PC-9 (cell line): ENCODE measurements at regions of chr16 and their contacts with region 1.

Region 1: GRCh38 chr16:13436641-13437412 is 483.1 kb upstream of the ERCC4 start:
- DNase-seq: peak; percentile 58 to 73
- H3K4me3 ChIP-seq: no peak overlapping the region
- H3K27ac ChIP-seq: no peak overlapping the region
- H3K4me1 ChIP-seq: peaks cover 25% of the 10 kb centered on the region
- H3K27me3 ChIP-seq: no peaks in the 10 kb centered on the region
- CTCF ChIP-seq: no peak

Region 2: DNA sequence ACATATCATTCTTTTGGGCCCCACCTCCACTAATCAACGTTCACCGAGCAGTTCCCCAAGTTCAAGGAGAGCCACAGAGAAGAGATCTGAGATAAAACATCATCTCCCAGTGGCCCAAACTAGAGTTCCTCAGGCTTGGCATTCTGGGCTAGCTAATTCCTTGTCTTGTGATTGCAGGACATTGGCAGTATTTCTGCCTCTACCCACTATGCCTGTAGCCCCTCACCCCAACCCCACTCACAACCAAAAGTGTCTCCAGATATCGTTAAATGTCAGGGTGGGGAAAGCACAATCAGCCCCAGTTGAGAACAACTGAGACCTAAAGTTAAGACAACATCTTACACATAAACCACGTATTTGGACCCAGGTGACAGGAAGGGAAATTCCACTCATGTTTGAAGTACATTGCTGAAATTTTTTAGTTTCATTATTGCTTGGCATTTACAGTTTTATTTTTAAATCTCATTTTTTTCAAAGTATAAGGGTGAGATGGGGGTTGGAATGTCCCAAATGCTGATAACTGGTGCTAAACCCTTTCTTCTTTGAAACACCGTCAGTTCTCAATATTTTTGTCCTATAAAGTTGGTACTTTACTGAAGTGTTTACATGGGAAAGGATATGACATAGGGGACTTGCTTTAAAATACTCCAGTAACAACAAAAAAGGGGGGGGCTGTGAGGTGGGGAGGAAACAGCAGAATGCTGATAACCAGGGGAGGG is 1653.3 kb before region 1 on chr16:
- CTCF ChIA-PET with region 1: no interaction called
- POLR2A ChIA-PET with region 1: interaction called, 13 read pairs
- intact Hi-C with region 1: no loop called
- DNase-seq: peak in 1 of 2 experiments; percentile 27
- H3K4me3 ChIP-seq: no peak overlapping the region
- H3K27ac ChIP-seq: no peak overlapping the region; the same call in 1 of the 2 replicates
- H3K4me1 ChIP-seq: no peaks in the 10 kb centered on the region
- H3K27me3 ChIP-seq: no peaks in the 10 kb centered on the region
- CTCF ChIP-seq: no peak

Region 3: DNA sequence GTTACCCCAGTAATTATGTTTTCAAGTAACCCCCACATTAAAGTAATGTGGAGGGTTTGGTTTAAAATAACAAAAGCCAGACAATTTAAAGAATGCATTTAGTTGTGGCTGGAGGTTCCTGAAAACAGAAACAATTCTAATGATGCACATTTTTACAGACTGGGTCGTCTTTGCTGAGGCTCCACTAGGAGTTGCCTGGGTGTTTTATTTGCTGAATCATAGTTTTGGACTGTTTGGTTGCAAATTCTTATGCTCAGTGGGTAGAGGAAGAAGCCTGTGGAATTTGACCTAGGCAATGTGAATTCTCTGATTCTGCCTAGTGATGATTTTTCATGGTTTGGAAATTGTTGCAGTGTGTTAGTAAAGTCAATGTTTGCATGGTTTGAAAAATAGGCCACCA is 519.2 kb before region 1 on chr16:
- CTCF ChIA-PET with region 1: no interaction called
- POLR2A ChIA-PET with region 1: no interaction called
- intact Hi-C with region 1: loop called (anchors 5 kb)
- DNase-seq: peak; percentile 21 to 55
- H3K4me3 ChIP-seq: no peak overlapping the region
- H3K27ac ChIP-seq: peak overlapping the region; percentile 77
- H3K4me1 ChIP-seq: peaks cover 18% of the 10 kb centered on the region
- H3K27me3 ChIP-seq: no peaks in the 10 kb centered on the region
- CTCF ChIP-seq: no peak

Region 4: GRCh38 chr16:12976936-12977335 is 459.9 kb before region 1 on chr16:
- CTCF ChIA-PET with region 1: no interaction called
- POLR2A ChIA-PET with region 1: no interaction called
- intact Hi-C with region 1: loop called (anchors 5 kb)
- DNase-seq: peak in 1 of 2 experiments; percentile 63
- H3K4me3 ChIP-seq: no peak overlapping the region
- H3K27ac ChIP-seq: peak overlapping the region; percentile 49
- H3K4me1 ChIP-seq: peaks cover 24% of the 10 kb centered on the region
- H3K27me3 ChIP-seq: no peaks in the 10 kb centered on the region
- CTCF ChIP-seq: no peak